ENCODE measurements at regions of chr1 and their contacts with region 1.

Region 1: DNA sequence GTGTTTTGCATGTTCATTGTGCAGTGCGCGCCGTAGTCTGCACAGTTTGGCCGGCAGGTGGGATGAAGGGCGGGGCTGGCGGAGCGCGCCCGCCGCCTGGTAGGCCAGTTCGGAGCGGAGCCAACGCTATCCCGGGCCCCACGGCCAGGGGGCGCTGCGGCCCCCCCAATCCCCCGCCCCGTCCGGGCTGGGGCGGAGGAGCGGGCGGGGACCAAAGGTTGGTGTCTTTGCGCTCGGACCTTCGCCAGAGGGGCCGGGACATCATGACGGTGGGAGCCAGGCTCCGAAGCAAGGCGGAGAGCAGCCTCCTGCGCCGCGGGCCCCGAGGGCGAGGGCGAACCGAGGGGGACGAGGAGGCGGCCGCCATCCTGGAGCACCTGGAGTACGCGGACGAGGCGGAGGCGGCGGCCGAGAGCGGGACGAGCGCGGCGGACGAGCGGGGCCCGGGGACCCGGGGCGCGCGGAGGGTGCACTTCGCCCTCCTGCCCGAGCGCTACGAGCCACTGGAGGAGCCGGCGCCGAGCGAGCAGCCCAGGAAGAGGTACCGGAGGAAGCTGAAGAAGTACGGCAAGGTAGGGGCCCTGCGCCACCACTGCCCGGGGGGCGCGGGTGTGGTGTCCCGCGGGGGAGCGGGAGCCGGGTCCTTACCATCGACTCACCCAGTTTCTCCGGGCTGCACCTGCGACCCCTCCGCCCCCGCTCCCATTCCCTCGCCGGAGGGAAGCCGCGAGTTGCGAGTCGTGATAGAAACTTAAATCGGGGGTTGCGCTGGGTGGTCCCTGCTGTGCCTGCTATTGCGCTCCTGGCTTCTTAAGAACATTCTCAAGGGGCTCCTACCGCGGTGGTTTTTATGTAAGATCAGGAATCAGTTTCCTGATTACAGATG is at the start of gene C1orf115:
- DNase-seq: peak; percentile 85
- H3K4me3 Mint-ChIP-seq: peak within 1 kb of the TSS; percentile 77
- H3K27ac Mint-ChIP-seq: no peak within 1 kb of the TSS
- H3K4me1 Mint-ChIP-seq: peaks cover 7% of the 10 kb centered on the region
- H3K27me3 Mint-ChIP-seq: peaks cover 8% of the 10 kb centered on the region
- total RNA-seq, gene C1orf115: 0.73 to 0.76 TPM

Region 2: DNA sequence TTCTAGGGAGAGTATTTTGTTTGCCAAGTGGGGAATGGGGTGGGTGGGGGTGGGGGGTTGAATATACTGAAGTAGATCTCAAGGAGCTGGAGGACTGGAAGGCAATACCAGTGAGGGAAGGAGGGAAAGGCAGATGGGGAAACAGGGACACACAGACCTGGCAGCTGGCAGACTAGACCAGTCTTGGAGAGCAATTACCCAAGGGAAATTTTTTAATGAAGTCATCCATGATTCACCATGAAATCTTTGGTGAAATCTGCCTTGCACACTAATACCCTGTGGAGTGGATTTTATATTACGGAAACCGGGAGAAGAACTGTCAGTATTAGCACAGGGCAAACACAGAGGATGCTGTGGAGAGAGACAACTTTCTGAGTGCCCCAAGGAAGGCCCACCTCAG is 192.2 kb before region 1 on chr1:
- CTCF ChIA-PET with region 1: no interaction called
- POLR2A ChIA-PET with region 1: no interaction called
- intact Hi-C with region 1: no loop called
- DNase-seq: no peak
- H3K4me3 Mint-ChIP-seq: no peak overlapping the region
- H3K27ac Mint-ChIP-seq: no peak overlapping the region
- H3K4me1 Mint-ChIP-seq: no peaks in the 10 kb centered on the region
- H3K27me3 Mint-ChIP-seq: peaks cover 12% of the 10 kb centered on the region

Region 3: GRCh38 chr1:220527908-220528678 is 162.3 kb before region 1 on chr1 and contains the start of gene MARK1:
- CTCF ChIA-PET with region 1: no interaction called
- POLR2A ChIA-PET with region 1: no interaction called
- intact Hi-C with region 1: loop called (anchors 5 kb)
- DNase-seq: peak; percentile 20
- H3K4me3 Mint-ChIP-seq: peak within 1 kb of the TSS; percentile 75
- H3K27ac Mint-ChIP-seq: no peak within 1 kb of the TSS
- H3K4me1 Mint-ChIP-seq: peaks cover 11% of the 10 kb centered on the region
- H3K27me3 Mint-ChIP-seq: peaks cover 55% of the 10 kb centered on the region
- total RNA-seq, gene MARK1: not detected

Region 4: DNA sequence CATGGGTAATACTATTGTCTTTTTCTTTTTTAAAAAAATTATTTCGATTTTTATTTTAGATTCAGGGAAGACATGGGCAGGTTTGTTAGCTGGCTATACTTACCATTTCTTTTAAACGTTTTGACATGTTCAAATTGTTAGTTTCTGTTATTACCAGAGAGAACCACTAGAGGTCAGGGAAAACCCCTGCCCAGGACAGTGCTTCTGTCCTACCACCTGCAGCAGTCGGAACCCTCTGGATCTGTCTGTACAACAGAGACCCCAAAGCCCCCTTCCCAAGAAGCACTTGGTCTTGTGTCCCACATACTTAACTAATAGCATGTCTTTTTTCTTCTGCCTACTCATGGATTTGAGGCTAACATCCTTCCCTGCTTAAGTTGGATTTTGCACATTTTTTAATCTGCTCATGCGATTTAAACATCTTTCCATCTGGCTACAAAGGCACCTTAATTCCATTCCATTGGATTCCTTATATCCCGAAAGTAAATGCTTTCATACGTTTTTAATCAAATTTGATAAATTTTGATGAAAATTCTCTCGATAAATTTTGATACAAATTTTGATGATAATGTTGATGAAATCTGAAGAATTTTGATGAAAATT is 10.2 kb before region 1 on chr1:
- CTCF ChIA-PET with region 1: no interaction called
- POLR2A ChIA-PET with region 1: no interaction called
- intact Hi-C with region 1: loop called (anchors 1 kb)
- DNase-seq: peak; percentile 15
- H3K4me3 Mint-ChIP-seq: no peak overlapping the region
- H3K27ac Mint-ChIP-seq: no peak overlapping the region
- H3K4me1 Mint-ChIP-seq: peaks cover 4% of the 10 kb centered on the region
- H3K27me3 Mint-ChIP-seq: no peaks in the 10 kb centered on the region

Region 5: GRCh38 chr1:221045842-221046831 is 355.8 kb after region 1 on chr1:
- CTCF ChIA-PET with region 1: no interaction called
- POLR2A ChIA-PET with region 1: no interaction called
- intact Hi-C with region 1: no loop called
- DNase-seq: no peak
- H3K4me3 Mint-ChIP-seq: no peak overlapping the region
- H3K27ac Mint-ChIP-seq: no peak overlapping the region
- H3K4me1 Mint-ChIP-seq: no peaks in the 10 kb centered on the region
- H3K27me3 Mint-ChIP-seq: peaks cover 4% of the 10 kb centered on the region